ENCODE measurements at regions of chr10 and their contacts with region 1.

Region 1: GRCh38 chr10:33155720-33156638 is 178.5 kb downstream of the NRP1 start:
- DNase-seq: no peak
- H3K4me3 ChIP-seq: no peak overlapping the region
- H3K27ac ChIP-seq: no peak overlapping the region
- H3K4me1 ChIP-seq: no peaks in the 10 kb centered on the region
- H3K27me3 ChIP-seq: no peaks in the 10 kb centered on the region
- CTCF ChIP-seq: peak; percentile 51

Region 2: GRCh38 chr10:32795598-32796183 is 360.3 kb before region 1 on chr10:
- intact Hi-C with region 1: loop called (anchors 5 kb)
- DNase-seq: no peak
- H3K4me3 ChIP-seq: no peak overlapping the region
- H3K27ac ChIP-seq: no peak overlapping the region
- H3K4me1 ChIP-seq: no peaks in the 10 kb centered on the region
- H3K27me3 ChIP-seq: no peaks in the 10 kb centered on the region
- CTCF ChIP-seq: peak; percentile 55

Region 3: GRCh38 chr10:33008499-33009243 is 147.3 kb before region 1 on chr10:
- intact Hi-C with region 1: loop called (anchors 10 kb)
- DNase-seq: peak; percentile 83
- H3K4me3 ChIP-seq: no peak overlapping the region
- H3K27ac ChIP-seq: no peak overlapping the region
- H3K4me1 ChIP-seq: no peaks in the 10 kb centered on the region
- H3K27me3 ChIP-seq: no peaks in the 10 kb centered on the region
- CTCF ChIP-seq: peak; percentile 99

Measured in colonic mucosa (tissue), 4 donors.